ENCODE measurements at regions of chr1 and their contacts with region 1.

Region 1: DNA sequence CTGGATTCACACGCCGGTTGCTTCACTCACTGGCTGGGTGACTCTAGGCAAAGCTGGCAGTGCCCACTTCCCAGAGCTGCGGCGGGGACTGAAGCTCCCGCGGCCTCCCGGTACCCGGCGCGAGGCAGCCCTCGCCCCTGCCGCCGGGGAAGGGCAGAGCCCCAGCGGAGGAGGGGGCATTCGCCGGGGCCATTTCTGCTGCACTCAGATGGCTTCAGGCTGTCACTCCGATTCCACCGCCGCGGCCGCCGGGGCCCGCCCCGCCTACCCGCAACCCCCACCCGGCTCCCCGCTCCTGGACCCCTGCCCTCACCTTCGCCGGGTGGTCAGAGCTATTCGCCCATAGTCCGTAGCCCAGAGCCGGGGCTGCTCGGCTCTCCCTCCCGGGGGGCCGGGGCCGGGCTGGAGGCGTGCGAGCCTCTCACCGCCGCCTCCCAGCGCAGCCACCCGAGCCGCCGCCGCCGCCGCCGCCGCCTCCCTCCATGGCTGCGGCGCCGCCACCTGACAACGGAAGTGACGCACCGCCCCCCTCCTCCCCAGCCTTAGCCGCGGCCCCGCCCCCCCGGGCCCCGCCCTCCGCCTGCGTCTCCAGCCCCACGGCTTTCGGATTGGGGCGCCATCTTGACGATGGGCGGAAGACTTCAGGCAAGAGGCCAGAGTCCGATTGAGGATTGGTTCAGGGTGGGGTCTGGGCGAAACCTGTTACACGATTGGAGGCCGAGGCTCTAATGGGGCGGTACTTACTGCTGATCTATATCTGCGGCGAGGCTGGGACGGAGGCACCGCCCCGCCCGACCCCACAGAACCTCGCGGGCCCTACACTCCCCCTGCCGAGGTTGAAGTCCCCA is at the start of gene STK40:
- DNase-seq: peak; percentile 93
- ATAC-seq: peak; percentile 89
- H3K4me3 Mint-ChIP-seq: peak within 1 kb of the TSS; percentile 89
- H3K27ac Mint-ChIP-seq: peak within 1 kb of the TSS; percentile 96
- H3K4me1 Mint-ChIP-seq: peaks cover 33% of the 10 kb centered on the region
- H3K27me3 Mint-ChIP-seq: no peaks in the 10 kb centered on the region
- total RNA-seq, gene STK40: 59.5 to 64.7 TPM

Region 2: DNA sequence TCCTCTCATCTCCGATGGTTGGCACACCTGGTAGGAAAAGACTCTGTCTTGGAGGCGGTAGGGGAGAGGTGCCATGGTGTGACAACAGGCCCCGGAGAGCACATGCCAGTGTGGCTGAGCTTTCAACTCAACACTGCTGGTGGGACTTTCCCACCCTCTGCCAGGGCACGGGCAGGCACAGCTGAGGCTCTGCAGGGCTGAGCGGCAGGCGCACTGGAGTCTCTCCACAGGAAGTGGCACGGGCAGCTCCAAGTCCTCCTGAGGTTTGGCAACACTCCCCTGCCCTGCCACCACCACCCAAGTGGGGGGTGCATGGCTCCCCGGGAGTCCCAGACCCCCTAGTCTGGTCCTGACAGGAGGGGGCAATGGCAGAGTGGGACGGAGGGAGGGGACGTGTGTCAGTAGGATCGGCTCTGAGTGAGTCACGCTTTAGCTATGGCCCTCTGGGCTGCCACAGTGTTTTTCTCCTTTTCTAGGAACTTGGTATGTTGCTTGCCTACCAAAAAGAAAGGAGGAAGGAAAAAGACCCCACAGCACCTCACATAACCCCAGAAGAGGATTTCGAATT is 34.9 kb before region 1 on chr1:
- POLR2A ChIA-PET with region 1: interaction called, 10 read pairs
- DNase-seq: peak; percentile 50
- ATAC-seq: peak; percentile 78
- H3K4me3 Mint-ChIP-seq: peak overlapping the region; percentile 25
- H3K27ac Mint-ChIP-seq: peak overlapping the region; percentile 77
- H3K4me1 Mint-ChIP-seq: peaks cover 23% of the 10 kb centered on the region
- H3K27me3 Mint-ChIP-seq: no peaks in the 10 kb centered on the region

Region 3: GRCh38 chr1:36397378-36398230 is 12.0 kb after region 1 on chr1 and contains the start of gene LSM10:
- POLR2A ChIA-PET with region 1: interaction called, 105 read pairs
- DNase-seq: peak; percentile 90
- ATAC-seq: peak; percentile 91
- H3K4me3 Mint-ChIP-seq: peak within 1 kb of the TSS; percentile 97
- H3K27ac Mint-ChIP-seq: peak within 1 kb of the TSS; percentile 97
- H3K4me1 Mint-ChIP-seq: peaks cover 17% of the 10 kb centered on the region
- H3K27me3 Mint-ChIP-seq: no peaks in the 10 kb centered on the region
- total RNA-seq, gene LSM10: 44.1 to 45.1 TPM

Region 4: GRCh38 chr1:36420836-36421664 is 35.4 kb after region 1 on chr1:
- POLR2A ChIA-PET with region 1: interaction called, 20 read pairs
- DNase-seq: peak; percentile 95
- ATAC-seq: peak; percentile 97
- H3K4me3 Mint-ChIP-seq: peak overlapping the region; percentile 65
- H3K27ac Mint-ChIP-seq: peak overlapping the region; percentile 81
- H3K4me1 Mint-ChIP-seq: peaks cover 12% of the 10 kb centered on the region
- H3K27me3 Mint-ChIP-seq: no peaks in the 10 kb centered on the region